Activated CD4-positive, alpha-beta T cell treated with anti-CD3 and anti-CD28 coated beads for 36 hours (primary cell): ENCODE measurements at regions of chr3 and their contacts with region 1.

Region 1: DNA sequence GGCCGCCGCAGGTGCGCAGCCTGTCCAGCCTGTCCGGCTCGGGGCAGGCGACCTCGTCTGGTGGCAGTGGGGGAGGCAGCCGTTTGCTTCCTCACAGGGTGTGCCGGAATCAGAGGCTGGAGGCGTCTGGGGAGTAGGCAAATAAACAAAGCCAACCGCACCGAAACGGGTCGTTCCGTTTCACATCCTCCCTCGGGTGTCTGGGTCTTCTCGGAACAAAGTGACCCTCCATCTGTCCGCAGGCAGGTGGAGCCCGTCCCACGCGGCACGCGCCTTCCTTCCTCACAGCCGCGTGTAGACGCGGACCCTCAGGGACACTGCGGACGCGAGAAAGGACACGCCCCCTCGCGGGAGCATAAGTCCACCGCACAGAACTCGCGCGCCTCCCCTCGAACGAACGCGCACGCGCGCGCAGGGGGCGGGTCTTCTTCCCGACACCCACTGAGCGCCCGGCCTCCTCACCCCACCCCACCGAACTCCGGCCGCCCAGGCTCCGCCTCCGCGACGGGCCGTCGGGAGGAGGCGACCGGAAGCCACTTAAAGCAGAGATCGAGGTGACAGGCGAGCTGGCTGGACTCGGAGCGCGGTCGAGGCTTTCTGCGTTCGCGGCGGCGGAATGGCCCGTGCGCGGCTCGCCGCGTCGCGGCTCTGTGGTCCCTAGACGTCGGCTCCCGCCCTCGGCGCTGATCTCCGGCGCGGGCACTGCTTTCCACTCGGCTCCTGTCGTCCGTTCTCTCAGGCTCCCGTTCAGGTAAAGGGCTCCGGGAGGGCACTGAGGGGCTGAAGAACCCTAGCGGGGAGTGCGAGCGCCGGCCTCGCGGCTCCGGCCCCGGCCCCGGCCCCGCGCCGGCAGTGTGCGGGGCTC is at the start of gene TIPARP:
- DNase-seq: peak; percentile 99
- ATAC-seq: peak; percentile 86
- H3K4me3 Mint-ChIP-seq: peak within 1 kb of the TSS; percentile 77
- H3K27ac Mint-ChIP-seq: peak within 1 kb of the TSS; percentile 89
- H3K4me1 Mint-ChIP-seq: peaks cover 32% of the 10 kb centered on the region
- H3K27me3 Mint-ChIP-seq: no peaks in the 10 kb centered on the region
- total RNA-seq, gene TIPARP: 18.5 to 23.5 TPM

Region 2: GRCh38 chr3:155835341-155836071 is 838.8 kb before region 1 on chr3:
- CTCF ChIA-PET with region 1: no interaction called
- POLR2A ChIA-PET with region 1: no interaction called
- intact Hi-C with region 1: no loop called
- DNase-seq: no peak
- ATAC-seq: no peak
- H3K4me3 Mint-ChIP-seq: no peak overlapping the region
- H3K27ac Mint-ChIP-seq: no peak overlapping the region
- H3K4me1 Mint-ChIP-seq: no peaks in the 10 kb centered on the region
- H3K27me3 Mint-ChIP-seq: no peaks in the 10 kb centered on the region

Region 3: GRCh38 chr3:155870133-155870944 is 803.9 kb before region 1 on chr3 and contains the start of gene GMPS:
- CTCF ChIA-PET with region 1: no interaction called
- POLR2A ChIA-PET with region 1: no interaction called
- intact Hi-C with region 1: loop called in 1 of 2 experiments (anchors 5 kb)
- DNase-seq: peak; percentile 97
- ATAC-seq: peak; percentile 93
- H3K4me3 Mint-ChIP-seq: peak within 1 kb of the TSS; percentile 99
- H3K27ac Mint-ChIP-seq: peak within 1 kb of the TSS; percentile 98
- H3K4me1 Mint-ChIP-seq: peaks cover 20% of the 10 kb centered on the region
- H3K27me3 Mint-ChIP-seq: no peaks in the 10 kb centered on the region
- total RNA-seq, gene GMPS: 154 to 161 TPM

Region 4: DNA sequence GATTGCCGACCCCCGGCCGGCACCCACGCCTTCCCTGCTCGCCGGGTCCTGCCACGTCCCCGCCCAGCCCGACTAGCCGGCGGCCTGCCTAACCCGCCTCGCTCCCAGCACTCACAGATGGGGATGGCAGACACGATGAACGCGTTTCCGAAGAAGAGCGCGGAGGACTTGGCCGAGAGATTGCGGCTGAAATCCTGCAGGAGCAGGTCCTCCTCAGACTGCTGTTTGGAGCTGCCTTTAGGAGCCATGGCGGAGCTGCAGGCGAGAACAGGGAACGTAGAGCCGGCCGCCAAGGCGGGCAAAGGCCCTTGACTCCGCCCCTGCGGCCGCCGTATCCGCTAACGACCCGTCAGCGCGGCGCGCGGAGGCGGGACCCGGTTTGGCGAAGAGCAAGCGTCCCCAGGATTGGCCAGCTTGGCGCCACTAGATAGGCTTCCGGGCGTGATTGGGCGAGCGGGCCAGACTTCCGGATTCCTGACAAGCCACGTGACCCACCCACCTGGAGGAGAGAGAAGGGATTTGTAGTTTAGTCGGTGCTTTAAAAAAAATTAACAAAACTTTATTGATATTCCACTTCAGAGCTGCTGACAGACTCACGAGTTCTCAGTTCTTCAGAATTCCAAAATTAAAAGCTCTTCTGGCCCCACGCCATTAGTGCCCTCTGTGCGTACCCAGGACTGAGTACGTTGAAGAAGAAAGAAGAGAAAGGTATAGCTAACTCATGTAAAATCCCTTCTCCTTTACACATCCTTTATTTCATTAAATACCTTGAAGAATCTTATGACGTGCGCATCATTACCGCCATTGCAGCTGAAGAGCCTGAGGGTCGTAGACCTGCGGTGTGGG is 119.2 kb before region 1 on chr3 and contains the start of gene SSR3:
- CTCF ChIA-PET with region 1: interaction called, 3 read pairs
- POLR2A ChIA-PET with region 1: interaction called, 11 read pairs
- intact Hi-C with region 1: loop called (anchors 1 kb)
- DNase-seq: peak; percentile 100
- ATAC-seq: peak; percentile 99
- H3K4me3 Mint-ChIP-seq: peak within 1 kb of the TSS; percentile 92
- H3K27ac Mint-ChIP-seq: peak within 1 kb of the TSS; percentile 93
- H3K4me1 Mint-ChIP-seq: peaks cover 47% of the 10 kb centered on the region
- H3K27me3 Mint-ChIP-seq: no peaks in the 10 kb centered on the region
- total RNA-seq, gene SSR3: 144 to 156 TPM

Region 5: DNA sequence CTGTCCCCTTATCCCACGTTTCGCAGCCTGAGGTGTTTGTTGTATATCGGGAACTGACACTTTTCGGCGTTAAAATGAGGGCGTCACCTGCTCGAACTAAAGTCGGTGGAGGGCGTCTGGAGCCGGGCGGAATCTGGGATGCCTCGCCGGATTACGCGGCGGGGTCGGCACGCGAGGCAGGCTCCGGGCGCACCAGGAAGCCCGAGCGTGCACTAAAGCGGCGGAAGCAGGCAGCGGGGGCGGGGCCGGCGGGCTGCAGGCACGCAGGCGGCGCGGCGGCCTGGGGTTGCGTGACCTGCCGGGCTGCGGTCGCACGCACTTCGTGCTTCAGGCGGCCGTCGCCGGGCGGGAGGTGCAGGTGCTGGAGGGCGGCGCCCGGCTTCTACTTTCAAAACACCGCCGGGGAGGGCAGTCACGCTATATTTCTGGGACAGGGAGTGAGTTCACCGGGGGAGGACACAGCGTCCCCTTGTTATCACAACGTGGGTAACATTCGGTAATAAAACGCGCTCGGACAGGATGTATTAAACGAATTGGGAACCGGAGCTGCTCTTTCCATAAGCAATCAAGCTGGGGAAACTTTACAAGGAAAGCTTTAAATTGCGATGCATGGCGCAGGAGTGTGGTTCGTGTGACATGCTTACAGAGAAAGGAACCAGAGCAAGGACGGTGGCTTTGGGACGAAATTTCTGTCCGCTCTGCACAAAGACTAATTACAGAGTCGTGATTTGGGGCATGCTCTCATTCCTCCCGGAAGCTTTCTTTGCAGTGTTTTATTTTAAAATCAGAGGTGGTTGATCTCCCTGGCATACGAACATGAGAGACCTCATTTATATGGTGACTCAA is 142.7 kb after region 1 on chr3:
- CTCF ChIA-PET with region 1: interaction called, 3 read pairs
- POLR2A ChIA-PET with region 1: interaction called, 6 read pairs
- intact Hi-C with region 1: loop called (anchors 1 kb)
- DNase-seq: peak; percentile 92
- ATAC-seq: peak; percentile 83
- H3K4me3 Mint-ChIP-seq: peak overlapping the region; percentile 79
- H3K27ac Mint-ChIP-seq: peak overlapping the region; percentile 92
- H3K4me1 Mint-ChIP-seq: peaks cover 36% of the 10 kb centered on the region
- H3K27me3 Mint-ChIP-seq: no peaks in the 10 kb centered on the region

Region 6: DNA sequence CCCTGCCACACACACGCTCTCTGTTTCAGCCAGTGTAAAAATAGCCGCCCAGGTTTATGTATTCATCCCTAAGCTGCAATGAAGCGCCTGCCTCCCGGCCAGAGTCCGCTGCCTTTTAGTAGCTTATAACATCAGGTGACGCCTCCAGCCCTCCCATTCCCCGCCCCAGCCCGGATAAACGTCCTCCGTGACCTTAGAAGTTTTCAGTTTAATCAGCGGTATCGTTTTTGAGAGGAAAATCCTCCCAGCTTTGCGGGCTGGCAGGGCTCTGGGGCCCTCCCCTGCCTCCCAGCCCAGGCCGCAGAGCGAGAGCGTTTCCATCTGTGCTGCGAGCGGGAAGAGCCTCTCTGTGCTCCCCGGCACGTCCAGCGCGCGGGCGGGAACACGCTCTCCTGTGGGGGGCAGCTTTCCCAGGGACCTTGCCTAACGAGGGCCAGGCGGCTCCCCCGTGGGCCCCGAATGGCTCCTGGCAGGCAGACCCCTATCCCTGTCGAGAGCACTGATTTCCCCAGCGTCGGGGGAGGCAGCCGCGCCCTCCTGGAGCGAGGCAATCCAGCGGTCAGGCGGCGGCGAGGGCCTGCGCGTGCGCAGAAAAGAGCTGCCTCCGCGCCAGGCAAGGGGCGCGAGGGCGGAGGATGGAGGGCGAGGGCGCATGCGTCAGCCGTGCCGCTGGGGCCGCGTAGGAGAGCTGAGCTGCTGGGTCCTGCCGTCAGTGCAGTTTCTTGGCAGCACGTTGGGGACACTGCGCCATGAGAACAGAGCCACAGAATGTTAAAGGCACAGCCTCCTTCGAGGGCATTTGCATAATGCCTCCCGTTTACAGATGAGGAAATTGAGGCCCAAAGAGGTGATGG is 414.6 kb after region 1 on chr3:
- CTCF ChIA-PET with region 1: interaction called, 6 read pairs
- POLR2A ChIA-PET with region 1: interaction called, 3 read pairs
- intact Hi-C with region 1: loop called (anchors 1 to 2 kb)
- DNase-seq: peak; percentile 97
- ATAC-seq: peak; percentile 79
- H3K4me3 Mint-ChIP-seq: peak overlapping the region; percentile 72
- H3K27ac Mint-ChIP-seq: peak overlapping the region; percentile 97
- H3K4me1 Mint-ChIP-seq: peaks cover 71% of the 10 kb centered on the region
- H3K27me3 Mint-ChIP-seq: peaks cover 1% of the 10 kb centered on the region

Region 7: GRCh38 chr3:157159762-157160657 is 485.7 kb after region 1 on chr3 and contains the start of gene CCNL1:
- CTCF ChIA-PET with region 1: no interaction called
- POLR2A ChIA-PET with region 1: no interaction called
- intact Hi-C with region 1: loop called (anchors 1 kb)
- DNase-seq: peak; percentile 97
- ATAC-seq: peak; percentile 79
- H3K4me3 Mint-ChIP-seq: peak within 1 kb of the TSS; percentile 84
- H3K27ac Mint-ChIP-seq: peak within 1 kb of the TSS; percentile 97
- H3K4me1 Mint-ChIP-seq: peaks cover 37% of the 10 kb centered on the region
- H3K27me3 Mint-ChIP-seq: no peaks in the 10 kb centered on the region
- total RNA-seq, gene CCNL1: 163 to 215 TPM